Activated CD8-positive, alpha-beta memory T cell treated with anti-CD3 and anti-CD28 coated beads, Interleukin-2, amount 10 ng/mL, durations not matched to agents 7 days and 5 days (primary cell): ENCODE measurements at regions of chr9 and their contacts with region 1.

Region 1: DNA sequence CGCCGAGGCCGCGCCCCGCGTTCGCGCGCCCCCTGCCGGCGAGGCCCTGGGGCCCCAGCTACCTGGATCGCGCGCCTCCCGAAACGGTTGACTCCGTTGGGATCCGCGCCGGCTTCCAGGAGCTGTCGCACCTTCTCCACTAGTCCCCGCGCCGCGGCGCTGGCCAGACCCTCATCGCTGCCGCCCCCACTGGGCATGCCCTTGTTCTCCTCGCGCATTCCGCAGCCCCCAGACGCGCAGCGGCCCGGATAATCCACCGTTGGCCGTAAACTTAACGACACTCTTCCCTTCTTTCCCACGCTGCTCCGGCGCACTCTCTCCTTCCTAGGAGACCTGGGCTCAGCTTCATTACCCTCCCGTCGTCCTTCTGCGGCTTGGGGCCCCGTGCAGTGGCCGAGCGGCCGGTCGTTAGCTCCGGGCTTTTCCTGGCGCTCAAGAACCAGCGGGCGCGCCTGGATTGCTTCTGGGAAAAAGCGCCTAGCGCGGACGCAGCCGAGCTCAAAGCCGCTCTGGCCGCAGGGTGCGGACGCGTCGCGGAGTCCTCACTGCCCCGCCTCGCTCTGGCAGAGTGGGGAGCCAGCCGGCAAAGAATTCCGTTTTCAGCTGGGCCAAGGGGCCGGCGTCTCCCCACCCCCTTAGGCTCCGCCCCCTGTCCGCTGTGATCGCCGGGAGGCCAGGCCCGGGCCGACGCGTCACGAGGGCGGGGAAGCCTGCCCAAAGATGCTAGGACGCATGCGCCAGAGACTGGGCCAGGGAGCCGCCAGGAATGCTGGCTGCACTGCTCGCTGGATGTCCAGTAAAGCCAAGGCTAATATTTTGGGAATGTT is at the start of gene CDKN2B:
- DNase-seq: peak; percentile 84
- ATAC-seq: peak; percentile 86
- H3K4me3 Mint-ChIP-seq: peak within 1 kb of the TSS; percentile 81
- H3K27ac Mint-ChIP-seq: no peak within 1 kb of the TSS
- H3K4me1 Mint-ChIP-seq: peaks cover 30% of the 10 kb centered on the region
- H3K27me3 Mint-ChIP-seq: peaks cover 55% of the 10 kb centered on the region
- total RNA-seq, gene CDKN2B: 0.93 to 5.9 TPM

Region 2: DNA sequence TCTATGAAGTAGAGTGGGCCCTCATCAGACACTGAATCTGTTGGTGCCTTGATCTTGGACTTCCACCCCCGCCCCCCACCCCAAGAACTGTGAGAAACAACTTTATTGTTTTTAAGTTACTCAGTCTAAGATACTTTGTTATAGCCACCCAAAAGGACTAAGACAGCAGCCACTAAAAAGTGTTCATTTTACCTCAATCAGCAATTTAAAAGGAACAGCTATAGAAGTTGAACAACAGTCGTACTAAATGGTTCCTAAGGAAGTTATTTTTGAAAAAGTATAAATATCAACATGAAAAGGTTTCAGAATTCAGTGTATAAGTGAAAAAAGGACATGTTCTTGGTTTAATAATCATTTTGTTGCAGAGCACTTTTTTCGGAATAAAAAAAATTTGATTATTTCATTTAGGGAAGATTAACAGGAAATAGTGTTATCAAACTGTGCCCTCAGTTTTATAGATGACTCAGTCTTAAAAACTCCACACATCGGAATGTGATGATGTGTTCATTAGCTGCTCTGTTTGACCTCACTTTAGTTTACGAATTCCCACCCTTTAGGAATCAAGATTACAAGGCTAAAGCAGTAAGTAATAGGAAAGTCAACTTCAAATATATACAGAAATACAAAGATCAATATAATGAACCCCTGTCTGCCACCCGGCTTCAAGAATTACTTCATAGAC is 135.3 kb before region 1 on chr9:
- CTCF ChIA-PET with region 1: no interaction called
- DNase-seq: no peak
- ATAC-seq: no peak
- H3K4me3 Mint-ChIP-seq: no peak overlapping the region
- H3K27ac Mint-ChIP-seq: no peak overlapping the region
- H3K4me1 Mint-ChIP-seq: no peaks in the 10 kb centered on the region
- H3K27me3 Mint-ChIP-seq: no peaks in the 10 kb centered on the region

Region 3: GRCh38 chr9:21902136-21902535 is 106.8 kb before region 1 on chr9:
- CTCF ChIA-PET with region 1: no interaction called
- DNase-seq: no peak
- ATAC-seq: no peak
- H3K4me3 Mint-ChIP-seq: no peak overlapping the region
- H3K27ac Mint-ChIP-seq: no peak overlapping the region
- H3K4me1 Mint-ChIP-seq: peaks cover 10% of the 10 kb centered on the region
- H3K27me3 Mint-ChIP-seq: no peaks in the 10 kb centered on the region

Region 4: DNA sequence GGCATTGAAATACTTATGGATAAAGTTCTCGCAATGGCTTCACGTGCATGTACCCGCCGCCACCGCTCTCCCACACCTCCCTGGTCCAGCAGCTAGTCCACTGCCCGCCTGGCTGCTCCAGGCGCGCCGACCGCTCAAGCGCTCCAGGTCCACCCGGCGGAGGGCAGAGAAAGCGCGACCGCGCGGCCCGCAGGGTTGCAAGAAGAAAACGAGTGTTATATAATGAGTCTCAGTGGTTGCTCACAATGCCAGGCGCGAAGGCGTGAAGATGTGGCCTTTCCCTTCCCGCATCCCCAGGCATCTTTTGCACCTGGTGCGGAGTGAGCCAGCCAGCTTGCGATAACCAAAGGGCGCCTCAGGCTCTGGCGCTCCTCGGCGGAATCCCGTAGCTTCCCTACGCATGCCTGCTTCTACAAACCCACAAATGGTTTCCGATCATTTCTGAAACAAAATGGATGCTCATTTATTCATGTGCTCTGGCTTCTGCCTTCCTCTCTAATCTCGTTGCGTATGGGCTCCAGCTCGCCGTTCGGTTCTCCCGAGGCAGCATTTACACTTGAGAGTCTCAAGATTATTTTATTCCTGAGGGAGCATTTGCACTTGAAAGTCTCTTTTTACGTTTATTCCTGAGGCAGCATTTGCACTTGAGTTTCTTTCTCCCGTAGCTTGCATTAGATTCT is 40.5 kb before region 1 on chr9:
- CTCF ChIA-PET with region 1: interaction called, 37 read pairs
- DNase-seq: no peak
- ATAC-seq: no peak
- H3K4me3 Mint-ChIP-seq: peak overlapping the region; percentile 18
- H3K27ac Mint-ChIP-seq: peak overlapping the region; percentile 10
- H3K4me1 Mint-ChIP-seq: peaks cover 32% of the 10 kb centered on the region
- H3K27me3 Mint-ChIP-seq: peaks cover 96% of the 10 kb centered on the region

Region 5: DNA sequence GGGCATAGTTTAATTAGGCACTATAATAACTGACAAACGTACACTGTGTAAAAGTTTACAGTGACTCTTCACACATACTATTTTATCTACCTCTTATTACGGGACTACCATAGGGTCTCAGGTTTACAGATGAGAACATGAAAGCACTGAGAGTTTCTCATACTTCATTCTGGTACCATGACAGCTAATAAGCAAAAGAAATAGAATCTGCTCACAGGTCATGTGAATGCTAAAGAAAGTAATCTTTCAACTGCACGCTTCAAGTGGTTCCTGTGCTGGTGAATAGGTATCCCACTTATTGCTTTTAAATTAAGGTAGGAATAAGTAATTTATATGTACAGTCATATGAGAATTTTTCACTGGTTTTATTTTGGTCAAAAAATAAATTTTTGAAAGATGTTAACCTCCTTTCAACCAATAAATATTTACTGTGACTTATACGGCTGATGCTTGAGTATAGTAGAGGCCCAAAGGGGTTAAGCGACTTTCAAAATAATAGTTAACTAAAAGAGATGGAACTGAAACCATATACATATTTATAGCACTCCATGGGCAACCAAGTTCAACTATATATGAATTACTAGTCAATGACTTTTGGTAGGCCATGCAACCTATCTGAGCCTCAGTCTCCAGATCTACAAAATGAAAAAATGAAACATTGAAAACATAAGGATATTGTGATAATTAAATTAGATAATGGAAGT is 22.8 kb before region 1 on chr9:
- CTCF ChIA-PET with region 1: interaction called, 16 read pairs
- DNase-seq: no peak
- ATAC-seq: no peak
- H3K4me3 Mint-ChIP-seq: no peak overlapping the region
- H3K27ac Mint-ChIP-seq: no peak overlapping the region
- H3K4me1 Mint-ChIP-seq: peaks cover 18% of the 10 kb centered on the region
- H3K27me3 Mint-ChIP-seq: peaks cover 74% of the 10 kb centered on the region

Region 6: DNA sequence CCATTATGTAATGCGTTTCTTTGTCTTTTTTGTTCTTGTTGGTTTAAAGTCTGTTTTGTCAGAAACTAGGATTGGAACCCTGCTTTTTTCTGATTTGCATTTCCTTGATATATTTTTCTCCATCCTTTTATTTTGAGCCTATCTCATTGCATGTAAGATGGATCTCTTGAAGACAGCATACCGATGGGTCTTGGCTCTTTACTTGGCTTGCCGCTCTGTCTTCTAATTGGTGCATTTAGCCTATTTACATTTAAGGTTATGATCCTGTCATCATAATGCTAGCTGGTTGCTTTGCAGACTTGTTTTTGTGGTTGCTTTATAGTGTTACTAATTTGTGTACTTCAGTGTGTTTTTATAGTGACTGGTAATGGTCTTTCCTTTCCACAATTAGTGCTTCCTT is 13.4 kb after region 1 on chr9:
- CTCF ChIA-PET with region 1: interaction called, 24 read pairs
- DNase-seq: no peak
- ATAC-seq: no peak
- H3K4me3 Mint-ChIP-seq: no peak overlapping the region
- H3K27ac Mint-ChIP-seq: no peak overlapping the region
- H3K4me1 Mint-ChIP-seq: peaks cover 4% of the 10 kb centered on the region
- H3K27me3 Mint-ChIP-seq: peaks cover 47% of the 10 kb centered on the region

Region 7: GRCh38 chr9:22037954-22038690 is 29.2 kb after region 1 on chr9:
- CTCF ChIA-PET with region 1: interaction called, 71 read pairs
- DNase-seq: no peak
- ATAC-seq: no peak
- H3K4me3 Mint-ChIP-seq: no peak overlapping the region
- H3K27ac Mint-ChIP-seq: no peak overlapping the region
- H3K4me1 Mint-ChIP-seq: peaks cover 29% of the 10 kb centered on the region
- H3K27me3 Mint-ChIP-seq: peaks cover 22% of the 10 kb centered on the region

Region 8: DNA sequence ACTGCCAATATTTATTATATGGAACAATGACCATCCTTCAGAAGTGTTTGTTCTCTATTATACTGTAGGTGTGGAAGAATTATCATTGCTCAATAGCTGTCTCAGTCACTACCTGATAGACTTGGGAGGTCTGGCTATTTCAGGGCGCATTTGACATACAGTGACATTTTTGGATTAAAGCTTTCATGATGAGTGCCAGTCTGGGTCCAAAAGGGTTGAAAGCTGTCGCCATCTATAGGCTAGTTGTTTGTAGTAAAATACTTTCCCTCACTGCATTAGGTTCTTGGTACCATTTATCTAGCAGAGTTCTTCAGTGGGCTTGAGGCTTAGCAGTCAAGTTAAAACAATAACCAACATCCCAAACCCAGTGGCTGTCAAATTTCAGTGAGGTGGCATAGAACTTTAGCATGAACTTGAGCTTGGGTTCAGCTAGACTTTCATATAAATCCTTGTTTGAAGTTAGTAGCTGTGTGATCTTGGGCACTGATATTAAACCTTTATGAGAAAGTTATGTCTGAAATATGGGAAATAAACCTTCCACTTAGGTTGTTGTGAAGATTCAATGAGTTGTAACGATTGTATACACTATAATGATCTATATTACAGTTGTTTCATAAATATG is 110.7 kb after region 1 on chr9:
- CTCF ChIA-PET with region 1: interaction called, 19 read pairs
- DNase-seq: peak; percentile 43
- ATAC-seq: peak; percentile 93
- H3K4me3 Mint-ChIP-seq: no peak overlapping the region
- H3K27ac Mint-ChIP-seq: no peak overlapping the region
- H3K4me1 Mint-ChIP-seq: peaks cover 13% of the 10 kb centered on the region
- H3K27me3 Mint-ChIP-seq: peaks cover 66% of the 10 kb centered on the region

Region 9: DNA sequence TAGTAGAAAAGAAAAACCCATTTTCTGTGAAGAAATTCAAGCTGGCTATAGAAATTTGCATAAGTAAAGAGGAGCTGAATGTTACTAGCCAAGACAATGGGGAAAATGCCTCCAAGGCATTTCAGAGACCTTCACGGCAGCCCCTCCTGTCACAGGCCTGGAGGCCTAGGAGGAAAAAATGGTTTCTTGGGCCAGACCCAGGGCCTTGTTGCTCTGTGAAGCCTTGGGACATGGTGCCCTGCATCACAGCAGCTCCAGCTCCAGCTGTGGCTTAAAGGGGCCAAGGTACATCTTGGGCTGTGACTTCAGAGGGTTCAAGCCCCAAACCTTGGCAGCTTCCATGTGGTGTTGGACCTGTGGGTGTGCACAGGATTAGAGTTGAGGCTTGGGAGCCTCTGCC is 307.7 kb after region 1 on chr9:
- CTCF ChIA-PET with region 1: no interaction called
- DNase-seq: no peak
- ATAC-seq: no peak
- H3K4me3 Mint-ChIP-seq: no peak overlapping the region
- H3K27ac Mint-ChIP-seq: no peak overlapping the region
- H3K4me1 Mint-ChIP-seq: no peaks in the 10 kb centered on the region
- H3K27me3 Mint-ChIP-seq: peaks cover under 1% of the 10 kb centered on the region